Tibial artery (tissue), 4 donors: ENCODE measurements at regions of chr2 and their contacts with region 1.

Region 1: DNA sequence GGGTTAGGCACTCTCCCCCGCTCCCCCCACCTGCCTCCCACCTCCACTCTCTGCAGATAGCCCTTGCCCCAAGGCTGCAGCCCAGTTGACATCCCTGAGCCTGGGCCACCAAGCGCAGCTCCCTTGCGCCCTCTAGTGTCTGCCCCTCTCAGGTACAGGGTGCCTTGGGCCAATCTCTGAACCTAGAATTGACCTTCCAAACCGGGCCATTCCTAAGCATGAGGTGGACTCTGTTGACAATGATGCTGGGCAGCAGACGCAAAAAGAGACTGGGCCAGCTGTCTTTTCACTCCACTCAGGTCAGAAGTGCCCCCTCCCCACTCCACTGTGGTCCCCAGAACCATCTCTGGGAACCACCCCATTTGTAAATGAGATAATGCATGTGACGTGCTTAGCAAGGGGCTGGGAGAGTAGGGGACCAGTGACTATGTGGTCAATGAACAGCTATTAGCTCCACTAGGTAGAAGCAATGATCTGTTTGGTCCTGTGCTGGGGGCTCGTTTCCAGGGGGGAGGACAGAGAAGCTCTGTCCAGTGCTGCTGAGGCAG is 43.3 kb upstream of the PLB1 start:
- DNase-seq: peak; percentile 55 to 78
- H3K4me3 ChIP-seq: no peak overlapping the region
- H3K27ac ChIP-seq: no peak overlapping the region
- H3K4me1 ChIP-seq: peaks cover 0 to 7% (median 0%) of the 10 kb centered on the region in 4 donors
- H3K27me3 ChIP-seq: no peaks in the 10 kb centered on the region
- CTCF ChIP-seq: peak; percentile 88 to 91

Region 2: DNA sequence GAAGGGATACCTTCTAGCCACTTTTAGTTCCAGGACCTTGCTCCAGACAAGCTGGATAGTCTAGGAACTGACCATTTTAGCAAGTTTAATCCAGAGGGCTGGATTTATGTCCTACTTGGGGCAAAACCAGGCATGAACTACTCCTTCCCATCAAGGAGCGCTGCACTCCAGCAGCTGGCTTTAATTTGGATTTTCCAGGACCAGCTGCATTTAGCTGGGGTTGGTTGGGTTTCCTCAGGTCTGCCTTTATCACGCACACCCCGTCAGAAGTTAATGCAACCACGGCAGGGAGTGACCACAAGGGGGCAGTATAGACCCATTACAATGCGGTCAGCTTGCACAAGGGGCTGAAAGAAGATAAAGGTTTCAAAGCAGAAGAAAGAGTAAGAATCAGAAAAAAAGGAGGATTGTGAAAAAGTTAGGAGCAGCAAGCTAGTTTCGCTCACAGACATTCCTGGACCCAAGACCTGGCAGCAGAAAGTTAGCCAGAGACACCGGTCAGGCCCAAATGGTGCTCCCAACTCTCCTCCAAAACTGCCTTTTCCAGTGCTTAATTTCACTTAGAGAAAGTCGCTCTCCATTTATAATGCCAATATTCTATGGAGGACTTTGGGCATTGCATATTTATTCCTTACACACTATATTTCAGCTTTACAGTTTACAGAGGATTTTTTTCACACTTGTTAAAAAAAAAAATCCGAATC is 748.8 kb before region 1 on chr2:
- intact Hi-C with region 1: loop called (anchors 5 kb)
- DNase-seq: peak; percentile 92 to 93
- H3K4me3 ChIP-seq: no peak overlapping the region
- H3K27ac ChIP-seq: peak overlapping the region; percentile 94 to 97
- H3K4me1 ChIP-seq: peaks cover 4 to 53% (median 41%) of the 10 kb centered on the region in 4 donors
- H3K27me3 ChIP-seq: no peaks in the 10 kb centered on the region
- CTCF ChIP-seq: peak; percentile 88 to 95

Region 3: GRCh38 chr2:27754138-27754588 is 698.4 kb before region 1 on chr2:
- intact Hi-C with region 1: loop called (anchors 5 kb)
- DNase-seq: peak; percentile 63 to 85
- H3K4me3 ChIP-seq: no peak overlapping the region
- H3K27ac ChIP-seq: no peak overlapping the region
- H3K4me1 ChIP-seq: peaks cover 0 to 18% (median 7%) of the 10 kb centered on the region in 4 donors
- H3K27me3 ChIP-seq: no peaks in the 10 kb centered on the region
- CTCF ChIP-seq: peak; percentile 64 to 73